HepG2 (cell line): ENCODE measurements at regions of chr2 and their contacts with region 1.

Region 1: DNA sequence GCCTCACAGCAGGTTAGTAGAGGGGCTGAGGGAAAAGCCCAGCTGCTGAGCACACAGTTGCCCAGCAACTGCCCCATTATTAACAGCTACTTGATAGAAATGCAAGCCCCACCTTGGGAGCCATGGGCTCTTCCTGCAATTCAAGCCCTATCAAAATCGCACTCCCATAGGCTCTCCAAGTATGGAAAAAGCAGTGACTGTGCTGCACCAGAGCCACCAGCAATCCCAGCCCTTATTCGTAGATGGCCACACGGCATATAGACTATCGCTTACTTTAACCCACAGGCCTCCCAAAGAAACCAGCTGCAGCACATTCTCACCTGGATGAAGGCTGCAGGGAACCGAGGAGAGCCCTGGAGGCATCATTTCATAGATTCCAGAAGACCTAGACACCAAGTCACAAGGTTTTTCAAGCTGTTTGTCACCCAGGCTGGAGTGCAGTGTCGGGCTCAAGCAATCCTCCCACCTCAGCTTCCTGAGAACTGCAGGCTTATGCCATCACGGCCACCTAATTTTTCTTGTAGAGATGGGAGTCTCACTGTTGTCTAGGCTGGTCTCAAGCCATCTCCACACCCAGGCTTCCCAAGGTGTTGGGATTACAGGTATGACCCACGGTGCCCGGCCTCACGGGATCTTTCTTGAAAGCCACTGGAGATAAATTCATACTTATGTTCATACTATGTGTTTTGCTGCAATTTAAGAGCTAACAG is 11.3 kb downstream of the NCL start:
- DNase-seq: peak; percentile 23
- ATAC-seq: peak; percentile 7
- H3K4me3 ChIP-seq: no peak overlapping the region
- H3K27ac ChIP-seq: peak overlapping the region; percentile 11
- H3K4me1 ChIP-seq: peaks cover 10% of the 10 kb centered on the region
- H3K27me3 ChIP-seq: no peaks in the 10 kb centered on the region
- CTCF ChIP-seq: no peak
- EP300 ChIP-seq: no peak; a peak in 1 of 4 replicates
- POLR2A ChIP-seq: peak; percentile 47 to 77
- RAD21 ChIP-seq: no peak

Region 2: DNA sequence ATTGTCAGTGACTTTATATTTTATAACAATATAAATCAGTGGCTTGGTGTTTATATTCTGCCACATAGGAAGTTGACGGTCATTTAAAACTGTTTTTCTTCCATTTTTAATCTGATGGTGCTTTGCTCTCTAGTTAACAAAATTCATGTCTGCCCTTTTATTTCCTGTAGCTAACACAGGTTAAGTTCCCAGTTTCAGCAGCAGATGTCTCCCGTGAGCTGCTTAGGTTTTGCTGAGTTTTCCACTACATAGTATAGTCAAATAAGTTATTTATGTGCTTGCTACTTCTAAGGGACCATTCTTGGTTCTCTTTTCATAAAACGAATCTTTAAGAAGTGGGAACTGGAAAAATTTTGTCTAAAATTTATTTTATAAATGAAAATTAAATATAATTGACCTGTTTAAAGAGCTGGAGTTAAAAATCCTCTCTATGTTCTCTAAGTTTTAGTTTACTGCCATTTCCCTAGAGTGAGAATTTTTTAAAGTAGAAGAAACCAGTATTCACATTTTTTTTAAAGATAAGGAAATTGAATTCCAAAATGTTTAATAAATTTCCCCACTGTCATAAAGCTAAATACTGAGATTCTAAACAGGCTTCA is 348.7 kb before region 1 on chr2:
- CTCF ChIA-PET with region 1: interaction called, 7 read pairs
- POLR2A ChIA-PET with region 1: no interaction called
- in situ Hi-C with region 1: no loop called
- intact Hi-C with region 1: loop called (anchors 5 kb)
- DNase-seq: peak; percentile 50
- ATAC-seq: peak; percentile 82
- H3K4me3 ChIP-seq: no peak overlapping the region
- H3K27ac ChIP-seq: no peak overlapping the region
- H3K4me1 ChIP-seq: peaks cover 23% of the 10 kb centered on the region
- H3K27me3 ChIP-seq: no peaks in the 10 kb centered on the region
- CTCF ChIP-seq: peak; percentile 79
- EP300 ChIP-seq: no peak
- POLR2A ChIP-seq: no peak
- RAD21 ChIP-seq: peak; percentile 59; the same call in 1 of the 2 replicates

Region 3: DNA sequence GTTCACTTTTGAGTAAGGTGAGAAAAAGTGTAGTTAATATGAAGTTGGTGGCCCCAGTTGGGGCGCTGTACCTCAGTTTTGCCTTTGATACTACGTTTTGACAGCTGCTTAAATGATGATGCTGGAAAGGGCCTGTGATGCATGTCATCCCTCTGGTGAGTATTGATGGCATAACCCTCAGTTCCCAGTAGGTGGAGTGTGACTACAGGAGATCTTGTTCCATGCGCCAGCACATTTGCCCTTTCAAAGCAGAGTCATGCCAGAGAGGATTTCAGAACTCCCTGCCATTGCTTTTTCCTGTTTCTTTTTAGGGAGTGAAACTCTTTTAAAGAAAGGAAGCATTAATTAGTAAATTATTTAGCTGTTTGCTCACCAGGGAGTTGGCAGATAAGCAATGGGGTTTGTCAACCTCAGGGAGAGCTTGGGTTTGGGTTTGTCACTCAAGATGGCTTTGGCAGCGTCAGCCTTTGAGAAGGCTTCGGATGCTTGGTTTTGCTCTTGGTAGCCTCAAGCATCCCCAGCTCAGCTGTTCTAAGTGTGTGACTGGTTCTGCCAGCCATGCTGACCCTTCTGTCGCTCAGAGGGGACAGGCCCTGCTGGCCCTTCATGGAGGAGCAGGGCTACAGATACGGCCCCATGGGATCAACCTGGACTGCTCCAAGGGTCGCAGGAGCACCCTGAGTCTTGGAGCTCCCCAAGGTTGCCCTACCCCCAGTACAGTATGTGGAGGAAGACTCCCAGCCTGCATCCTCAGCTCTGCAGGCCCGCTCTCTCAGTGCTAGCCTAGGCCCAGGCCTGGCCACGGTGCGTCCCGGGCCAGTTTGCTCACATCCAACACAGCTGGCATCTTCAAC is 225.4 kb before region 1 on chr2:
- CTCF ChIA-PET with region 1: interaction called, 9 read pairs
- POLR2A ChIA-PET with region 1: interaction called, 4 read pairs
- in situ Hi-C with region 1: no loop called
- intact Hi-C with region 1: loop called (anchors 1 kb)
- DNase-seq: peak; percentile 84
- ATAC-seq: peak; percentile 99
- H3K4me3 ChIP-seq: no peak overlapping the region
- H3K27ac ChIP-seq: no peak overlapping the region
- H3K4me1 ChIP-seq: peaks cover 14% of the 10 kb centered on the region
- H3K27me3 ChIP-seq: no peaks in the 10 kb centered on the region
- CTCF ChIP-seq: peak; percentile 95
- EP300 ChIP-seq: no peak
- POLR2A ChIP-seq: no peak
- RAD21 ChIP-seq: peak; percentile 92

Region 4: GRCh38 chr2:232183279-232183678 is 730.3 kb after region 1 on chr2:
- CTCF ChIA-PET with region 1: no interaction called
- POLR2A ChIA-PET with region 1: no interaction called
- in situ Hi-C with region 1: no loop called
- intact Hi-C with region 1: no loop called
- DNase-seq: no peak
- ATAC-seq: no peak
- H3K4me3 ChIP-seq: no peak overlapping the region
- H3K27ac ChIP-seq: no peak overlapping the region
- H3K4me1 ChIP-seq: 0 out of 2 replicates have a peak, but pooled peaks cover 8% of the 10 kb centered on the region
- H3K27me3 ChIP-seq: no peaks in the 10 kb centered on the region
- CTCF ChIP-seq: no peak
- EP300 ChIP-seq: no peak
- POLR2A ChIP-seq: no peak
- RAD21 ChIP-seq: no peak